ENCODE measurements at regions of chr1 and their contacts with region 1.

Region 1: GRCh38 chr1:54810100-54810942 is 9.2 kb upstream of the TTC22 start:
- DNase-seq: peak; percentile 30 to 60
- ATAC-seq: peak; percentile 77 to 90 (median 82)
- H3K4me3 ChIP-seq: no peak overlapping the region
- H3K27ac ChIP-seq: no peak overlapping the region
- H3K4me1 ChIP-seq: peaks cover 0 to 4% (median 0%) of the 10 kb centered on the region in 9 donors
- H3K27me3 ChIP-seq: peaks cover 0 to 8% (median 0%) of the 10 kb centered on the region in 7 donors
- CTCF ChIP-seq: peak; percentile 45 to 84 (median 81)

Region 2: DNA sequence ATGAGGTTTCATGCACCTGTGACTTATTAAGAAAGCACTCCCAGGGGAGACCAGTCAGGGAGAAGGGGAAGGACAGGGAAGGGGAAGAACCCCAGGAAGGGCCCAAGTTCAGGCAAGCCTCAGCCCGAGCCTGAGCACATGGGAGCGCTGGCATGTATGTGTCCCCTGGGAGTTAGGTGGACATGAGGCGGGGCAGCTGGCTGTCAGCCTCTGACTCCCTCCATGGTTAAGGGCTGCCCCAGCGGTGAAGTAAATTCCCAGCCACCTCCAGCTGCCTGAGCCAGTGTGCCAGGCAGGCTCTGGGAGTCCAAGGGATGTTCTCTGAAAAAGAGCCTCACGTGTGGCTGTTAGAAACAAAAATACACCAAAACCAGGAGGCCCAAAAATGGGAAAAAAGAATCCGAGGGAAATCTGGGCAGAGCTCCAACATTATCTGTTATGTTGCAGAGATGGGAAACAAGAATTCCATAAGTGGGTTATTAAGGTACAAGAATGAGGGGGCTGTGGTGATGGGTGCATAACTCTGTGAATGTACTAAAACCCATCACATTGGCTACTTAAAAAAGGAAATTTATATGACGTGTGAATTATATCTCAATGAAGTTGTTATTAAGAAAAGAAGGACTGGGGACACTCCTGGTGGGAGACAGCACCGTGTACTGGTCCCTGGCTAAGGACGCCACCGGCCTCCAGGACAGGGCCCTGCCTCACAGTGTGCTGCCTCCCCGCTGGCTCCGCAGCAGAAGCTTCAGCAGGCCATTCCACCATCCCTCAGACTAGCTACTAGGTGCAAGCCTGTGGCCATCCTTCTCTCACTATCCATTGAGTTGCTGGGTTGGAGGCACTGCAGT is 1332.4 kb before region 1 on chr1:
- intact Hi-C with region 1: loop called in 1 of 10 experiments (anchors 5 kb)
- DNase-seq: no peak
- ATAC-seq: no peak
- H3K4me3 ChIP-seq: no peak overlapping the region
- H3K27ac ChIP-seq: no peak overlapping the region
- H3K4me1 ChIP-seq: no peaks in the 10 kb centered on the region
- H3K27me3 ChIP-seq: peaks cover 0 to 33% (median 4%) of the 10 kb centered on the region in 7 donors
- CTCF ChIP-seq: no peak

Region 3: DNA sequence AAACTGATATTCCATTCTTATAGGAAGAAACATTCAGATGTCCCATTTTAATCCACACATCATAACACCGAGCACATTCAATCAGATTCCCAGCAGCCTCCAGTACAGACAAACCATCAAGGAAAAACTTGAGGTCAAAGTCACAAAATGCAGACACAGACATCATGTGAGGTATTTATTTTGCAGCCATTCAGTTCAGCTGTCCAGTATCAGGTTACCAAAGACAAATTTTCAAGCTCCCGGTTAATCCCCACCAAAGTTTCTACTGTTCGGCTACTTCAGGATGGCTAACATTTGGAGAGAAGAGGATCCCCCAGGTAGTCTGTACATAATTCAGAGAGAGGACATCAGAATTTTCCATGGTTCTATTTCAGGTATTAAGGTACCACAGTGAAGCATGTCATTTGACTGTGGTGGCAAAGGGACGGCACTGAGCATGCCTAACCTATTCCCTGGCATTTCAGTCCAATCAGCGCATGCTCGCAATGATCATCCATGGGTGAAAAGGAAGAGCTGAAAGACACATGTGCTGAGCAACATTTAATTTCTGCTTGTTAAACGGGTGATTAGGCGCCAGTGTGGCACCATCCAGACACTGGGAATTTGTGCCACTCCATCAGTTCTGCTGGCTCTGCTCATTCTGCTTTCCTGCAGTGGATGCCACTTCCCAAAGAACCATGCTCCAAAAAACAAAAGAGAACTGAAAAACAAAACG is 958.6 kb before region 1 on chr1:
- intact Hi-C with region 1: loop called in 1 of 10 experiments (anchors 10 kb)
- DNase-seq: no peak
- ATAC-seq: no peak
- H3K4me3 ChIP-seq: no peak overlapping the region
- H3K27ac ChIP-seq: no peak overlapping the region
- H3K4me1 ChIP-seq: no peaks in the 10 kb centered on the region
- H3K27me3 ChIP-seq: no peaks in the 10 kb centered on the region
- CTCF ChIP-seq: no peak

Region 4: GRCh38 chr1:54671985-54672608 is 138.2 kb before region 1 on chr1:
- intact Hi-C with region 1: loop called in 6 of 10 experiments (anchors 5 to 10 kb)
- DNase-seq: no peak
- ATAC-seq: peak in 3 of 8 donors; percentile 12 to 51 (median 40)
- H3K4me3 ChIP-seq: no peak overlapping the region
- H3K27ac ChIP-seq: no peak overlapping the region
- H3K4me1 ChIP-seq: no peaks in the 10 kb centered on the region
- H3K27me3 ChIP-seq: no peaks in the 10 kb centered on the region
- CTCF ChIP-seq: peak in 7 of 9 donors; percentile 46 to 80 (median 53)

Region 5: DNA sequence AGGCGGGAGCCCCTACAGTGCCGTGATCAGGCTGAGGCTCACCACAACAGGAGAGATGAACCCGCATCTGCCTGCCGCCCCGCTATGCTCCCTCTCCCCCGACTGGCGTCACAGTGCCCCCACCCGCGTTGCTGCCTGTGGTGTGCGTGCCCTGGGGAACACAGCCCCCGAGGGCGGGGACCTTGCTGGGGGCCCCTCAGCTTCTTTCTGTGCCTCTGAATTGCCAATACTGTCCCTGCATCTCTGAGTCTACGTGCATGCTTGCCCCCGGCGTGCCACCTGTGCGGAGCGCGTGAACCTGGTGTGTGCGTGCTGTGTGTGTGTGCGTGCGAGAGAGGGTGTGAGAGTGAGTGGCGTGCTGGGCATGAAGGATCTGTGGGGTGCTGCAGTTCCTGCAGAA is 56.3 kb before region 1 on chr1:
- intact Hi-C with region 1: loop called in 1 of 10 experiments (anchors 10 kb)
- DNase-seq: no peak
- ATAC-seq: peak in 1 of 8 donors; percentile 11
- H3K4me3 ChIP-seq: no peak overlapping the region
- H3K27ac ChIP-seq: no peak overlapping the region
- H3K4me1 ChIP-seq: no peaks in the 10 kb centered on the region
- H3K27me3 ChIP-seq: no peaks in the 10 kb centered on the region
- CTCF ChIP-seq: no peak

Measured in heart right ventricle (tissue), 16 donors.